ENCODE measurements at regions of chr11 and their contacts with region 1.

Region 1: DNA sequence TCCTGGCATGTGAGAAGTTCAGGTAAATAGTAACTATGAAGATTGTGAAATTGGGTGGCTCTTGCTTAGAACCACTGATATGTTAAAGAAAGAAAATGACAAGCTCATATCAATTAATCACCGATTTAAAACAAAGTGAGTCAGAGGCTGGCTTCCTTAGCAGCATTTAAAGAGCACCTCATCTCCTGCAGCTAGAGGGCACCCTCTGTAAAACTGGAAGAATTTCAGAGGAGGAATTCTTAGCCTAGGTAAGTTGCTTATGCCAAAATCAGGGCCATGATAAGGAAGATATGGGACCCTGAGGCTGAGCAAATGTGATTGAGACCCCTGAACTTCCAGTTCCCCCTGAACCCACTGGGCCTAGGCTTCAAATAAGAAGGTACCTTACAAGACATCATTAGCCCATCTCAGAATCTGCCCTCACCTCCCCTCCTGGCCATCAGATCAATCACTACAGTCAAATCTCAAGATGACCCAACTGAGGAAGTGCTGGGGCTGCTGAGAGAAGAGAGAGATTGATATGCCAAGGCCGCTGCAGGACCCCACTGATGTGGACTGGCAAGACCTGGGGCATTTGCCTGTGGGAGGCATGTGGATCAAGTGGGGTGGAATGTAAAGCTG is 8.6 kb upstream of the CD3E start:
- DNase-seq: peak; percentile 54
- ATAC-seq: no peak
- H3K4me3 ChIP-seq: no peak overlapping the region
- H3K4me3 Mint-ChIP-seq: no peak overlapping the region
- H3K27ac ChIP-seq: no peak overlapping the region
- H3K27ac Mint-ChIP-seq: no peak overlapping the region
- H3K4me1 ChIP-seq: no peaks in the 10 kb centered on the region
- H3K4me1 Mint-ChIP-seq: peaks cover 2% of the 10 kb centered on the region
- H3K27me3 ChIP-seq: peaks cover 0 to 7% (median 2%) of the 10 kb centered on the region in 4 experiments
- H3K27me3 Mint-ChIP-seq: peaks cover 20% of the 10 kb centered on the region
- CTCF ChIP-seq: peak; percentile 60

Region 2: GRCh38 chr11:118321386-118322121 is 25.6 kb after region 1 on chr11:
- CTCF ChIA-PET with region 1: interaction called, 10 read pairs
- POLR2A ChIA-PET with region 1: no interaction called
- intact Hi-C with region 1: no loop called
- DNase-seq: peak; percentile 42
- ATAC-seq: peak; percentile 47
- H3K4me3 ChIP-seq: no peak overlapping the region
- H3K4me3 Mint-ChIP-seq: peak overlapping the region; percentile 32
- H3K27ac ChIP-seq: peak overlapping the region; percentile 50 to 59
- H3K27ac Mint-ChIP-seq: peak overlapping the region; percentile 89
- H3K4me1 ChIP-seq: peaks cover 68 to 72% of the 10 kb centered on the region in 2 donors
- H3K4me1 Mint-ChIP-seq: peaks cover 56% of the 10 kb centered on the region
- H3K27me3 ChIP-seq: no peaks in the 10 kb centered on the region
- H3K27me3 Mint-ChIP-seq: peaks cover 4% of the 10 kb centered on the region
- CTCF ChIP-seq: no peak

Region 3: GRCh38 chr11:118353084-118353710 is 57.3 kb after region 1 on chr11:
- CTCF ChIA-PET with region 1: interaction called, 45 read pairs
- POLR2A ChIA-PET with region 1: interaction called, 5 read pairs
- intact Hi-C with region 1: loop called (anchors 1 kb)
- DNase-seq: peak; percentile 64
- ATAC-seq: no peak
- H3K4me3 ChIP-seq: no peak overlapping the region
- H3K4me3 Mint-ChIP-seq: no peak overlapping the region
- H3K27ac ChIP-seq: no peak overlapping the region
- H3K27ac Mint-ChIP-seq: no peak overlapping the region
- H3K4me1 ChIP-seq: no peaks in the 10 kb centered on the region
- H3K4me1 Mint-ChIP-seq: no peaks in the 10 kb centered on the region
- H3K27me3 ChIP-seq: peaks cover 0 to 3% (median 0%) of the 10 kb centered on the region in 4 experiments
- H3K27me3 Mint-ChIP-seq: peaks cover 20% of the 10 kb centered on the region
- CTCF ChIP-seq: peak; percentile 83

Region 4: DNA sequence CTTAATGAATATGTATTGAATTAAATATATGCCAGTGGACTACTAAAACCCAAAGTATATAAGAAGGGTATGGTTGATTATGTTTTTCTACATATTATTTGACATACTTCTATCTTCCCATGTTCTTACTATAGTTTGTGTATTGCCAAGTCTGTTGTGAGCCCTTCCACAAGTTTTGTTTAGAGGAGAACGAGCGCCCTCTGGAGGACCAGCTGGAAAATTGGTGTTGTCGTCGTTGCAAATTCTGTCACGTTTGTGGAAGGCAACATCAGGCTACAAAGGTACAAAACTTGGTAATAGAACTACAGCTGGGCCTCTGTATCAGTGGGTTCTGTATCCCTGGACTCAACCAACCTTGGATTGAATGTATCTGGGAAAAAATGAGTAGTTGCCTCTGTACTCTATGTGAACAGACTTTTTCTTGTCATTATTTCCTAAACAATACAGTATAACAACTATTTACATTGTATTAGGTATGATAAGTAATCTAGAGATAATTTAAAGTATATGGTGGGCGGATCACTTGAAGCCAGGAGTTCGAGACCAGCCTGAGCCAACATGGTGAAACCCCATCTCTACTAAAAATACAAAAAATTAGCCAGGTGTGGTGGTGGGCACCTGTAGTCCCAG is 192.7 kb after region 1 on chr11:
- CTCF ChIA-PET with region 1: interaction called, 9 read pairs
- POLR2A ChIA-PET with region 1: no interaction called
- intact Hi-C with region 1: loop called (anchors 1 kb)
- DNase-seq: peak; percentile 84
- ATAC-seq: peak; percentile 60
- H3K4me3 ChIP-seq: no peak overlapping the region
- H3K4me3 Mint-ChIP-seq: no peak overlapping the region
- H3K27ac ChIP-seq: no peak overlapping the region
- H3K27ac Mint-ChIP-seq: no peak overlapping the region
- H3K4me1 ChIP-seq: no peaks in the 10 kb centered on the region
- H3K4me1 Mint-ChIP-seq: no peaks in the 10 kb centered on the region
- H3K27me3 ChIP-seq: no peaks in the 10 kb centered on the region
- H3K27me3 Mint-ChIP-seq: no peaks in the 10 kb centered on the region
- CTCF ChIP-seq: peak; percentile 92

Measured in B cell (primary cell).